ENCODE measurements at regions of chr9 and their contacts with region 1.

Region 1: DNA sequence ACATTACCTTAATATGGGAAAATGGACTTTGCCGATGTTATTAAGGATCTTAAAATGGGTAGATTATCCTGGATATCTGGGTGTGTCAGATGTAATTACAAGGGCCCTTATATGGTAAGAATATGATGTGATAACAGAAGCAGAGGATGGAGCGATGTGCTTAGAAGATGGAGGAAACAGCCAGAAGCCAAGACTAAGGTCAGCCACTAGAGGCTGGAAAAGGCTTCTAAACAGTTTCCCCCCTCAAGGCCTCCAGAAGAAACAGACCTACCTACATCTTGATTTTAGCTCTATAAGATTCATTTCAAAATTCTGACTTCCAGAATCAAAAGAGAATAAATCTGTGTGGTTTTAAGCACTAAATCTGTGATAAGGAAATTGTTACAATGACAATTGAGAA is 131.9 kb downstream of the CAAP1 start:
- DNase-seq: no peak
- H3K4me3 ChIP-seq: no peak overlapping the region
- H3K27ac ChIP-seq: no peak overlapping the region
- H3K4me1 ChIP-seq: no peaks in the 10 kb centered on the region
- H3K27me3 ChIP-seq: no peaks in the 10 kb centered on the region
- CTCF ChIP-seq: no peak
- EP300 ChIP-seq: no peak
- POLR2A ChIP-seq: no peak

Region 2: DNA sequence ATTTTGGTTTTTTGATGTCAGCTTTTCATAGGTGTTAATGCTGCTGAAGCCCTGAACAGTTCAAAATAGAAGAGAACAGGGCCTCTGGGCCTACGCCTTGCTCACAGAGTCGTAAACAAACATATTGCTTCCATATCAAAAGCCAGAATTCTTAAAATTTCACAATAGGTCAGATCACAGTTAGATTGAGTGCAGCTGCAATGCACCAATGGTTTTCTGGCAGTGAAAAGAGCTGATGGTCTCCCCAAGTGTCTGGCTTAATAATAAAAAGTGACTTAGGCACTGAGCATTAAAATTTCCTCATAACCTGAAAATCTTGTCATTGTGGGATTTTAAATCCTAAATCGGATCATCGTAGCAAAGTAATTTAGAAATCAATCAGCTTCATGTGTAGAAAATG is 361.1 kb before region 1 on chr9:
- intact Hi-C with region 1: no loop called
- DNase-seq: no peak
- H3K4me3 ChIP-seq: no peak overlapping the region
- H3K27ac ChIP-seq: no peak overlapping the region
- H3K4me1 ChIP-seq: no peaks in the 10 kb centered on the region
- H3K27me3 ChIP-seq: no peaks in the 10 kb centered on the region
- CTCF ChIP-seq: no peak
- EP300 ChIP-seq: no peak
- POLR2A ChIP-seq: no peak

Region 3: DNA sequence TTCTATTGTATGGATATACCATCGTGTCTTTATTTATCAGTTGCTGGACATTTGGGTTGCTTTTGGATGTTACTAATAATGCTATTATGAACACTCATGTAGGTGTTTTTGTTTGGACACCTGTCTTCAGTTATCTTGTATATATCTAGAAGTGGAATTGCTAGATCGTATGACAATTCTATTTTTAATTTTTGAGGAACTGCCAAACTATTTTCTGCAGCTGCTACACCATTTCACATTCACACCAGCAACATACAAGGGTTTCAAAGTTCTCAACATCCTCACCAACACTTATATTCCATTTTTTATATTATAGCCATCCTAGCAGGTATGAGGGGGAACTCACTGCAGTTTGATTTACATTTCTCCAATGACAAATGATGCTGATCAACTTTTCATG is 192.7 kb before region 1 on chr9:
- intact Hi-C with region 1: no loop called
- DNase-seq: no peak
- H3K4me3 ChIP-seq: no peak overlapping the region
- H3K27ac ChIP-seq: no peak overlapping the region
- H3K4me1 ChIP-seq: no peaks in the 10 kb centered on the region
- H3K27me3 ChIP-seq: no peaks in the 10 kb centered on the region
- CTCF ChIP-seq: no peak
- EP300 ChIP-seq: no peak
- POLR2A ChIP-seq: no peak

Region 4: GRCh38 chr9:26809795-26810194 is 49.1 kb after region 1 on chr9:
- intact Hi-C with region 1: loop called in 1 of 4 experiments (anchors 5 kb)
- DNase-seq: no peak
- H3K4me3 ChIP-seq: no peak overlapping the region
- H3K27ac ChIP-seq: no peak overlapping the region
- H3K4me1 ChIP-seq: no peaks in the 10 kb centered on the region
- H3K27me3 ChIP-seq: no peaks in the 10 kb centered on the region
- CTCF ChIP-seq: no peak
- EP300 ChIP-seq: no peak
- POLR2A ChIP-seq: no peak

Measured in ovary (tissue), 10 donors.